ENCODE measurements at regions of chrX and their contacts with region 1.

Region 1: DNA sequence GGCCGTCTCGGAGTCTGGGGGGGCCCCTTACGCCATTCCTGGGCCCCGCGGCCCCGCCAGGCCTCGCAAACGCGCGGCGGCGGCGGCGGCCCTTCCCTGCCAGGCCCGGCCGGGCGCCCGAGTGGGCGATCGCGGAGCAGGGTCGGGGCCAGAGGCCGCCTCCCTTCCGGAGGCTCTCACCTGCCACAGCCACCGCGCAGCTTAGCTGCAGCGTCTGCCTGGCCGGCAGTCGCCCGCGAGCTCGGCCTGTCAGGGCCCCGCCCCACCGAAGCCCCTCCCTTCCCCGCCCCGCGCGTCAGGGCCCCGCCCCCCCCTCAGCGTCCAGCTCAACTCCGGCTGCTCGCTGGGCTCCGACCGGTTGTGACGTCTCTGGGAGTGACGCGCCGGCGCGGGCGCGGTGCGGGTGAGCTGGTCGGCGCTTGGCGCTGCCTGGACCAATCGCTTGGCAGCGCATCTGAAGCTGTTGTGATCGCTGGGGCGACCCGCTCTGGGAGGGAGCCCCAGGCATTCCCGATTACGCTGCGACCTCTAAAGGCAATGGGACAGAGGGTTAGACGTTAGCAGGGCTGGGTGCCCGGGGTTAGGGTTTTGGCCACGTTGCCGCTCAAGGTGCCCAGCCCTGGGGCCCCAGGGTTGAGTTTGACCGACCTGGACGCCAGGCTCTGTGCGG is at the start of gene SLC10A3:
- DNase-seq: peak; percentile 93 to 95 (median 95)
- H3K4me3 ChIP-seq: peak within 1 kb of the TSS; percentile 55 to 83 (median 68)
- H3K27ac ChIP-seq: peak within 1 kb of the TSS; percentile 72 to 88
- H3K4me1 ChIP-seq: peaks cover 0 to 25% (median 15%) of the 10 kb centered on the region in 4 experiments
- H3K27me3 ChIP-seq: peaks cover 0 to 5% (median 0%) of the 10 kb centered on the region in 5 experiments

Region 2: GRCh38 chrX:154397819-154398724 is 92.5 kb before region 1 on chrX and contains the start of gene RPL10:
- CTCF ChIA-PET with region 1: interaction called, 3 read pairs
- POLR2A ChIA-PET with region 1: interaction called, 10 read pairs
- DNase-seq: peak; percentile 94 to 98 (median 97)
- H3K4me3 ChIP-seq: peak within 1 kb of the TSS; percentile 60 to 89 (median 77)
- H3K27ac ChIP-seq: peak within 1 kb of the TSS; percentile 94 to 97
- H3K4me1 ChIP-seq: peaks cover 0 to 22% (median 12%) of the 10 kb centered on the region in 4 experiments
- H3K27me3 ChIP-seq: no peaks in the 10 kb centered on the region

Measured in common myeloid progenitor, CD34-positive (primary cell).